ENCODE measurements at regions of chr5 and their contacts with region 1.

Region 1: DNA sequence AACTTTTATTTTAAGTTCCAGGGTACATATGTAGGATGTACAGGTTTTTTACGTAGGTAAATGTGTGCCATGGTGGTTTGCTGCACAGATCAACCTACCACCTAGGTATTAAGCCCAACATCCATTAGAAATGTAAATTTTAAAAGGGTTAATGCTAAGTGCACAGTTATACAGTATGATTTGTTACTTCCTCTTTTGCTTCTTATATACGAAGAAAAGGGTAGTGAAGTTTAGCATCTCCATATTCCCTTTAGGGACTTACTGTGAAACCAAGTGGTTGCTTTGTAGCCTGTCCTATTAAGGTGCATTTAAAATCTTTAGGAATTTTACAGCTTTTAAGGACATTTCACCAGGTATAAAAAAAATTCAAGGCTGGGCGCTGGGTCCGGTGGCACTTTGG is 46.4 kb downstream of the RBM27 start:
- DNase-seq: no peak
- ATAC-seq: no peak
- H3K4me3 ChIP-seq: no peak overlapping the region
- H3K27ac ChIP-seq: no peak overlapping the region
- H3K4me1 ChIP-seq: no peaks in the 10 kb centered on the region
- H3K27me3 ChIP-seq: no peaks in the 10 kb centered on the region
- CTCF ChIP-seq: no peak
- POLR2A ChIP-seq: no peak
- RAD21 ChIP-seq: no peak

Region 2: DNA sequence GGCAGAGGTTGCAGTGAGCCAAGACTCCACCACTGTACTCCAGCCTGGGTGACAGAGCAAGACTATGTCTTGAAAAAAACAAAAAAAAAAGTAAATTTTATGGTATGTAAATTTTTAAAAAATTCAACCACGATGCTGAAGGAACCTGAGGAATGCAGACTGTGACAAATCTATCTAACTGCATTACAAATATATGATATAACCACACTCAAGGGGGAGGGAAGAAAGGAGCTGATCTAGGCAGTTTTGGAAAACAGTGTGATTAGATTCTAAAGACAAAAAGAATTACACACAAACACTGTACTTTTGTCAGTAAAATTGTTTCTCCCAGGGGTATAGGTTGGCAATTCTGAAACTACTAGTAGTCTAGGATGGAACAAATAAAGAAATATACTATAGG is 84.3 kb before region 1 on chr5:
- CTCF ChIA-PET with region 1: no interaction called
- POLR2A ChIA-PET with region 1: no interaction called
- RAD21 ChIA-PET with region 1: no interaction called
- intact Hi-C with region 1: loop called (anchors 5 kb)
- DNase-seq: no peak
- ATAC-seq: no peak
- H3K4me3 ChIP-seq: no peak overlapping the region
- H3K27ac ChIP-seq: no peak overlapping the region
- H3K4me1 ChIP-seq: no peaks in the 10 kb centered on the region
- H3K27me3 ChIP-seq: no peaks in the 10 kb centered on the region
- CTCF ChIP-seq: no peak
- POLR2A ChIP-seq: no peak
- RAD21 ChIP-seq: no peak

Region 3: GRCh38 chr5:146475190-146475801 is 225.5 kb after region 1 on chr5:
- CTCF ChIA-PET with region 1: no interaction called
- POLR2A ChIA-PET with region 1: no interaction called
- RAD21 ChIA-PET with region 1: no interaction called
- intact Hi-C with region 1: no loop called
- DNase-seq: no peak
- ATAC-seq: peak; percentile 57; the same call in 1 of the 2 replicates
- H3K4me3 ChIP-seq: no peak overlapping the region
- H3K27ac ChIP-seq: no peak overlapping the region
- H3K4me1 ChIP-seq: no peaks in the 10 kb centered on the region
- H3K27me3 ChIP-seq: no peaks in the 10 kb centered on the region
- CTCF ChIP-seq: peak in 2 of 3 experiments; percentile 49 to 51; a peak in 4 of 6 replicates
- POLR2A ChIP-seq: no peak
- RAD21 ChIP-seq: no peak

Measured in HCT116 (cell line).